ENCODE measurements at regions of chr4 and their contacts with region 1.

Region 1: GRCh38 chr4:11323771-11324170 is 104.9 kb downstream of the HS3ST1 start:
- DNase-seq: no peak
- ATAC-seq: no peak
- H3K4me3 ChIP-seq: no peak overlapping the region
- H3K4me1 ChIP-seq: no peaks in the 10 kb centered on the region
- CTCF ChIP-seq: no peak

Region 2: GRCh38 chr4:11393551-11393950 is 69.8 kb after region 1 on chr4:
- intact Hi-C with region 1: loop called in 1 of 2 experiments (anchors 5 kb)
- DNase-seq: no peak
- ATAC-seq: no peak
- H3K4me3 ChIP-seq: no peak overlapping the region
- H3K4me1 ChIP-seq: no peaks in the 10 kb centered on the region
- CTCF ChIP-seq: no peak

Region 3: DNA sequence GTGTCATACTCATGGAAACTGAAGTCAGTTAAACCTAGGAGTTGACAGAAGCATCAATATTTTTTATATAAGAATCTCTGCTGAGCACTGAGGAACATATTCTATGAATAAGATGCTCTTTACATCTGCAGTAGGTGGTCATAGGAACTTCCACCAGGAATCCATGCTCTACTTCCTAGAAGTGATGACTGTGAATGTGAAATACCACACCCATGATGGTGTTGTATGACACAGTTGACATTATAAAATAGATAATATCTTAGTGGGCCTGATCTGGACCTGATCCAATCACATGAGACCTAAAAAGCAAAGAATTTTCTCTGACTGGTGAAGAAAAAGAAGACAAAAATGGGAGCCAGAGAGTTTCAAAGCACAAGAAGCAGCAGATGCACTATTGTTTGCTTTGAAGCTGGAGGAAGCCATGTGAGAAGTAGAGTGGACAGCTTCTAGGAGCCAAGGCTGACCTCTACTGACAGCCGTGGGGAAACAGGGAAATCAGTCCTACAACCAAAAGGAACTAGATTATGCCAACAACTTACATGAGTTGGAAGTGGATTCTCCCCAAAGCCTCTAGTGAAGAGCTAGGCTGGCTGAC is 173.5 kb after region 1 on chr4:
- intact Hi-C with region 1: no loop called
- DNase-seq: no peak
- ATAC-seq: peak; percentile 59
- H3K4me3 ChIP-seq: no peak overlapping the region
- H3K4me1 ChIP-seq: no peaks in the 10 kb centered on the region
- CTCF ChIP-seq: no peak